IMR-90 (cell line): ENCODE measurements at regions of chrX and their contacts with region 1.

Region 1: GRCh38 chrX:130196466-130196865 is 24.7 kb downstream of the RAB33A start:
- DNase-seq: no peak
- ATAC-seq: no peak
- H3K4me3 ChIP-seq: no peak overlapping the region
- H3K27ac ChIP-seq: no peak overlapping the region
- H3K4me1 ChIP-seq: no peaks in the 10 kb centered on the region
- H3K27me3 ChIP-seq: no peaks in the 10 kb centered on the region; the same call in 1 of the 2 replicates
- CTCF ChIP-seq: no peak
- POLR2A ChIP-seq: no peak
- RAD21 ChIP-seq: no peak

Region 2: GRCh38 chrX:129772796-129773431 is 423.6 kb before region 1 on chrX:
- CTCF ChIA-PET with region 1: no interaction called
- POLR2A ChIA-PET with region 1: no interaction called
- dilution Hi-C with region 1: no loop called
- in situ Hi-C with region 1: no loop called
- intact Hi-C with region 1: no loop called
- DNase-seq: no peak
- ATAC-seq: no peak
- H3K4me3 ChIP-seq: no peak overlapping the region
- H3K27ac ChIP-seq: no peak overlapping the region
- H3K4me1 ChIP-seq: no peaks in the 10 kb centered on the region
- H3K27me3 ChIP-seq: peaks cover 14% of the 10 kb centered on the region
- CTCF ChIP-seq: no peak
- POLR2A ChIP-seq: no peak
- RAD21 ChIP-seq: no peak

Region 3: DNA sequence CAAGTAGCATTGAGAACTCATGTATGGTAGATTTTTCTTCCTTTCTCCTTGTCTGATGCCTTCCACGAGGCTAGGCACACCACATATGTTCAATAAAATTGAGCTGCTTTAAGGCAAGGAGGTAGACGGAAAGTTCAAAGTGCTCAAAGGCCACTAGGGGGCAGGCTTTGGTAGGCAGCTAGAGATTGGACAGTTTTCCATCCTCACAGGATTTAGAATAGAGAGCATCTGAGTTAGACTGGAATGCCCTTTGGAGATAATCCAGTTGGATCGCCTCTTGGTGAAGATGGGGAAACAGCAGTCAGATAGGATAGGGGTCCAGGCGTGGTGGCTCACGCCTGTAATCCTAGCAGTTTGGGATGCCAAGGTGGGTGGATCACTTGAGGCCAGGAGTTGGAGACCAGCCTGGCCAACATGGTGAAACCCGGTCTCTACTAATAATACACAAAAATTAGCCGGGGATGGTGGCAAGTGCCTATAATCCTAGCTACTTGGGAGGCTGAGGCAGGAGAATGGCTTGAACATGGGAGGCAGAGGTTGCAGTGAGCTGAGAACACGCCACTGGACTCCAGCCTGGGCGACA is 116.6 kb before region 1 on chrX:
- CTCF ChIA-PET with region 1: interaction called, 6 read pairs
- POLR2A ChIA-PET with region 1: no interaction called
- dilution Hi-C with region 1: no loop called
- in situ Hi-C with region 1: loop called (anchors 5 kb)
- intact Hi-C with region 1: loop called (anchors 1 kb)
- DNase-seq: peak; percentile 75
- ATAC-seq: peak; percentile 79
- H3K4me3 ChIP-seq: no peak overlapping the region
- H3K27ac ChIP-seq: no peak overlapping the region
- H3K4me1 ChIP-seq: peaks cover 4% of the 10 kb centered on the region; the same call in 1 of the 2 replicates
- H3K27me3 ChIP-seq: no peaks in the 10 kb centered on the region
- CTCF ChIP-seq: peak; percentile 77
- POLR2A ChIP-seq: no peak
- RAD21 ChIP-seq: peak; percentile 80

Region 4: DNA sequence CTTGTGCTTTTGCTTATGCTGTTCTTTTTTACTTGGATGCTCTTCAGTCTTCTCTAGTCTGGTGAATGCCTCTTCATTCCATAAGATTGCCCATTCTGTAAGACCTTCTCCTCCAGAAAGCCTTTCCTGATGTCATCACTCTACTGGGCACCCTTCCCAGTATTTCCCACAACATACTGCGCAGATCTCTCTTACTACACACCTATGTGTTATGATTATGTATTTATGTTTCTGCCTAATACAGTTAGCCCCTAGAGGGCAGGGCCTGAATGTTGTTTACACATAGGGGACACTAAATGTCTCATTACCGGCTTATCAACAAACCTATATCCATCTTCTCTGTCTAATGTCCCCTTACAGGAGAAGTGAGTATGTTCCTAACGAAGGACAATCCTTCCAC is 52.0 kb before region 1 on chrX:
- CTCF ChIA-PET with region 1: no interaction called
- POLR2A ChIA-PET with region 1: no interaction called
- dilution Hi-C with region 1: no loop called
- in situ Hi-C with region 1: no loop called
- intact Hi-C with region 1: loop called (anchors 2 kb)
- DNase-seq: peak; percentile 78
- ATAC-seq: peak; percentile 65
- H3K4me3 ChIP-seq: no peak overlapping the region
- H3K27ac ChIP-seq: no peak overlapping the region
- H3K4me1 ChIP-seq: no peaks in the 10 kb centered on the region
- H3K27me3 ChIP-seq: peaks cover 1% of the 10 kb centered on the region
- CTCF ChIP-seq: peak; percentile 32; the same call in 1 of the 2 replicates
- POLR2A ChIP-seq: no peak
- RAD21 ChIP-seq: no peak

Region 5: GRCh38 chrX:130159776-130160175 is 36.7 kb before region 1 on chrX:
- CTCF ChIA-PET with region 1: no interaction called
- POLR2A ChIA-PET with region 1: no interaction called
- dilution Hi-C with region 1: no loop called
- in situ Hi-C with region 1: no loop called
- intact Hi-C with region 1: loop called (anchors 1 kb)
- DNase-seq: no peak
- ATAC-seq: no peak
- H3K4me3 ChIP-seq: no peak overlapping the region
- H3K27ac ChIP-seq: no peak overlapping the region
- H3K4me1 ChIP-seq: no peaks in the 10 kb centered on the region
- H3K27me3 ChIP-seq: no peaks in the 10 kb centered on the region
- CTCF ChIP-seq: no peak
- POLR2A ChIP-seq: no peak
- RAD21 ChIP-seq: no peak